ENCODE measurements at regions of chr9 and their contacts with region 1.

Region 1: GRCh38 chr9:104927912-104928740 is at the start of gene ABCA1:
- DNase-seq: peak; percentile 90
- ATAC-seq: peak; percentile 71
- H3K4me3 Mint-ChIP-seq: peak within 1 kb of the TSS; percentile 79
- H3K27ac Mint-ChIP-seq: peak within 1 kb of the TSS; percentile 73
- H3K4me1 Mint-ChIP-seq: peaks cover 21% of the 10 kb centered on the region
- H3K27me3 Mint-ChIP-seq: peaks cover 5% of the 10 kb centered on the region
- total RNA-seq, gene ABCA1: 4.5 to 5.2 TPM

Region 2: GRCh38 chr9:104617418-104617817 is 310.7 kb before region 1 on chr9:
- CTCF ChIA-PET with region 1: no interaction called
- POLR2A ChIA-PET with region 1: no interaction called
- intact Hi-C with region 1: no loop called
- DNase-seq: no peak
- ATAC-seq: no peak
- H3K4me3 Mint-ChIP-seq: no peak overlapping the region
- H3K27ac Mint-ChIP-seq: no peak overlapping the region
- H3K4me1 Mint-ChIP-seq: no peaks in the 10 kb centered on the region
- H3K27me3 Mint-ChIP-seq: peaks cover 3% of the 10 kb centered on the region

Region 3: DNA sequence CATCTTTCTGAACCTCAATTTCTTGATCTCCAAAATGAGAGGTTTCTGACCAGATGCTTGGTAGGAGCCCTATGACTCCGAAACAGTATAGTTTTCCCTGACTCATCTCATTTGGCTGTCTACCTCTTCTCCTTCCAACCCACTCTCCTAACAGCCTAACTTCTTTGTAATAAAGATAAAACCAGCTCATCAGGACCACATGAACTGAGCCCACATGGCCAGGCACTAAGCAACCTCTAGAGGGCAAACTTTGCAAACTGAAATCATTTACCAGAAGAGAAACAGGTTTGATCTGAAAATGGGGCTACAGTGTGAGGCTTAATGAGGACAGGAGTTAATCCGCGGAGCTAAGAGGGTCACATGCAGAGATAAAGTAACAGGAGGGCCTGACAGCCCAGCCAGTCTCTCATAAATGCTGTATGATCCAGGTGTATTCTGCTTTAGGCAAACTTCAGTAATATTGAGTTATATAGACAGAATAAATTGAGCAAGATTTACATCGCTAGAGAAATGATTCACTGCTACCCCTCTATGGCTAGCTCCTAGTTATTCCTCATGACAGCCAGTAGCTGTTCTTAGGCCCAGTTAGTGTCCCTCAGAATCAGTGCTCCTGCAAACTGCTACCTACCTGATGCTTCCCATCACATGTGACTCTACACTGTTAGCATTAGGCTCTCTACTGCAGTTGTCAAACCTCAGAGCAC is 64.8 kb before region 1 on chr9:
- CTCF ChIA-PET with region 1: interaction called, 4 read pairs
- POLR2A ChIA-PET with region 1: interaction called, 3 read pairs
- intact Hi-C with region 1: loop called in 1 of 2 experiments (anchors 1 kb)
- DNase-seq: peak; percentile 62
- ATAC-seq: peak; percentile 94
- H3K4me3 Mint-ChIP-seq: no peak overlapping the region
- H3K27ac Mint-ChIP-seq: no peak overlapping the region
- H3K4me1 Mint-ChIP-seq: peaks cover 7% of the 10 kb centered on the region
- H3K27me3 Mint-ChIP-seq: no peaks in the 10 kb centered on the region

Region 4: GRCh38 chr9:104961238-104961637 is 33.1 kb after region 1 on chr9:
- CTCF ChIA-PET with region 1: interaction called, 6 read pairs
- POLR2A ChIA-PET with region 1: interaction called, 5 read pairs
- intact Hi-C with region 1: loop called (anchors 1 to 2 kb)
- DNase-seq: peak; percentile 86
- ATAC-seq: peak; percentile 100
- H3K4me3 Mint-ChIP-seq: peak overlapping the region; percentile 18
- H3K27ac Mint-ChIP-seq: peak overlapping the region; percentile 91
- H3K4me1 Mint-ChIP-seq: peaks cover 32% of the 10 kb centered on the region
- H3K27me3 Mint-ChIP-seq: no peaks in the 10 kb centered on the region

Region 5: DNA sequence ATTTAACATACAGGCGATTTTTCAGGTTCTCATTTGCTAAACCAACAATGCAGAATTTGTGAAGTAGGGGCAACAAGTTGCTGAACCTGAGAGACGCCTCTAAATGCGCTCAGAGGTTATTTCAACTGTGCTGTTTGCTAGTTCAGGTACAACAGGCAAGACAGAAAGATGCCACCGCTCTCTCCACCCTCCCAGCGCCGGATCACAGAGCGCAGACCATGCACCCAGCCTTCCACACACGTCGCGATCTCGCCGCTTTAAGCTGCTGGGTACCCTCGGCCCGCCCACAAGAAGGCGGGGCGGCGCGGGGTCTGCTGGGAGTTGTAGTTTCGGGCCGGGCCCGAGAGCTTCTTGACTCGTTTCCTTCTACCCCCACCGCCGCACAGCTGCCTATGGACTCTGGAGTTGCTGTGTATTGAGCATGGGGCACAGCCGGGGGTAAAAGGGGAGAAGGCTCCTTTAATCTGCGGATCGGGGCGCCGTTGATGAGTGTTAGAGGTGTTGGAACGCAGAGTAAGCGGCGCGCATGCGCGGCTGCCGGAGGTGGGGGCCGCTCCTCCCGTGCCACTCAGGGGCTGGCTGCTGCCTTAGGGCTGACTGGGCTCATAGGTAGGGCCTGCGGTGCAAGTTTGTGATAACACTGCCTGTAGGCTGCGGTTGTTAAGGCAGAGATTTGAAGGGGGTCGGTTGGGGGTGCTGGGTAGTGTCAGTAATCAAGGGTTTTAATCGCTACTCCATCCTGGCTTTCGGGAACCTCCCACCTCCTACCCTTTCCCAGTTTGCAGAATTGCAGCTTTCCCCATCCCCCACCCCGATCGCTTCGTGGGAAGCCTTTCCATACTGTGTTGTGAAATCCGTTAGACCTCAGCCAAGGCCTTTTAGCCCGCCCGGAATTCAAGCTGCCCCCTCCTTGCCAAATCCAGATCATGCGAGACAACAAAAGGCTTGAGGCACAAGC is 40.2 kb after region 1 on chr9:
- CTCF ChIA-PET with region 1: interaction called, 5 read pairs
- POLR2A ChIA-PET with region 1: interaction called, 7 read pairs
- intact Hi-C with region 1: loop called (anchors 1 kb)
- DNase-seq: peak; percentile 94
- ATAC-seq: peak; percentile 99
- H3K4me3 Mint-ChIP-seq: peak overlapping the region; percentile 86
- H3K27ac Mint-ChIP-seq: peak overlapping the region; percentile 92
- H3K4me1 Mint-ChIP-seq: peaks cover 13% of the 10 kb centered on the region
- H3K27me3 Mint-ChIP-seq: peaks cover 9% of the 10 kb centered on the region

Region 6: DNA sequence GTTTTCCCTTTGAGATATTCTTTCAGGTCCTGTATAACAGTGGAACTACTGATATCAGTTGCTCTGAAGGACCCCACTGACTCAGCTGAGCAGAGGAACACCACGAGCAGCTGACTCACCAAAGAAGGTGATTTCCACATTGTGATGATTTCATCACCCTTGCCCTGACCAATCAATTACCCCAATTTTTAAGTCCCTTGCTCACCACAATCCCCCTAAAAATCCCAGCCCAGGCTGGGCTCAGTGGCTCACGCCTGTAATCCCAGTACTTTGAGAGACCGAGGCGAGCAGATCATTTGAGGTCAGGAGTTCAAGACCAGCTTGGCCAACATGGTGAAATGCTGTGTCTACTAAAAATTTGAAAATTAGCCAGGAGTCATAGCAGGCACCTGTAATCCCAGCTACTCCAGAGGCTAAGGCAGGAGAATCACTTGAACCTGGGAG is 125.1 kb after region 1 on chr9:
- CTCF ChIA-PET with region 1: interaction called, 3 read pairs
- POLR2A ChIA-PET with region 1: no interaction called
- intact Hi-C with region 1: loop called (anchors 1 kb)
- DNase-seq: peak; percentile 85
- ATAC-seq: peak; percentile 95
- H3K4me3 Mint-ChIP-seq: peak overlapping the region; percentile 27
- H3K27ac Mint-ChIP-seq: peak overlapping the region; percentile 88
- H3K4me1 Mint-ChIP-seq: peaks cover 43% of the 10 kb centered on the region
- H3K27me3 Mint-ChIP-seq: no peaks in the 10 kb centered on the region

Region 7: DNA sequence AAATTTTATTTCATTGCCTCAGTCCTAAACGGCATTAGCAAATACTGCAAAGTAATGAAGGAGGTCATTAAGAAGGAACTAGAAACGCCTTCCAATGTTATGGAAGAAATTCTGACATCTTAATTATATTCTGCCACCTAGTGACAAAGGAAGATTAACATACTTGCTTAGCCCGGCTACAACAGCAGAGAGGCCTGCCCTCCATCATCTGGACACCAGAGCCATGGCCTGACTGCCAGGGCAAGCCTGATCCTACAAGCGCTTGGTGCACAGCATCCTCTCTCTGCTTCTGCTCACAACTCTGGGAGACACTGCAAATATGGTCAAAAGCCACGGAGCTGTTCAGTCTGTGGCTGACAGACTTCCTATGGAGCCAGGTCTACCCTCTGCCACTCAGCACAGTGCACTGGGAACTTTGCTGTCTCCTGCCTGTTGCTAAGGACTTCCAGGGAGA is 229.0 kb after region 1 on chr9:
- CTCF ChIA-PET with region 1: interaction called, 4 read pairs
- POLR2A ChIA-PET with region 1: no interaction called
- intact Hi-C with region 1: loop called (anchors 1 kb)
- DNase-seq: peak; percentile 46
- ATAC-seq: peak; percentile 86
- H3K4me3 Mint-ChIP-seq: no peak overlapping the region
- H3K27ac Mint-ChIP-seq: no peak overlapping the region
- H3K4me1 Mint-ChIP-seq: peaks cover 14% of the 10 kb centered on the region
- H3K27me3 Mint-ChIP-seq: no peaks in the 10 kb centered on the region

Region 8: DNA sequence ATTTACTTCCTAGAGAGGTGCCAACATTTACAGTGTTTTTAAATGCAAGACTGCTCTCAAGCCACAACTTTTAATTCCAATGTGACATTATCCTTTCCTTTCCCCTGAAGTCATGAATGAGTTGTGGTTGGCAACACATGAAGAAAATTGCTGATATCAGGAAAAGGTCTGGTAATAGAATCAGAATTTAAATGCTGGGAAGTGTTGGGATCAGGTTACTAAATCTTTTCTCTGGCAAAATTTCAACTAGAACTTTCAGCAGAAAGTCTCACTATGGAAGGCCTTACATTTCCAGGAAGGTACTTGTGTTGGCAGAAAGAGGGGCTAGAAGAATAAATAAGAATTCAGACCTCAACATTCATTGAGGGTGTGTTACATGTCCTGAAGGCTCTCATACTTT is 305.7 kb after region 1 on chr9:
- CTCF ChIA-PET with region 1: no interaction called
- POLR2A ChIA-PET with region 1: no interaction called
- intact Hi-C with region 1: no loop called
- DNase-seq: no peak
- ATAC-seq: no peak
- H3K4me3 Mint-ChIP-seq: no peak overlapping the region
- H3K27ac Mint-ChIP-seq: no peak overlapping the region
- H3K4me1 Mint-ChIP-seq: no peaks in the 10 kb centered on the region
- H3K27me3 Mint-ChIP-seq: peaks cover 5% of the 10 kb centered on the region

Region 9: GRCh38 chr9:105414947-105415661 is 487.0 kb after region 1 on chr9:
- CTCF ChIA-PET with region 1: no interaction called
- POLR2A ChIA-PET with region 1: no interaction called
- intact Hi-C with region 1: loop called in 1 of 2 experiments (anchors 1 kb)
- DNase-seq: peak; percentile 70
- ATAC-seq: peak; percentile 71
- H3K4me3 Mint-ChIP-seq: no peak overlapping the region
- H3K27ac Mint-ChIP-seq: no peak overlapping the region
- H3K4me1 Mint-ChIP-seq: no peaks in the 10 kb centered on the region
- H3K27me3 Mint-ChIP-seq: peaks cover 36% of the 10 kb centered on the region